Activated CD4-positive, alpha-beta memory T cell treated with anti-CD3 and anti-CD28 coated beads for 36 hours (primary cell): ENCODE measurements at regions of chr1 and their contacts with region 1.

Region 1: GRCh38 chr1:156751758-156752757 is 583 bp upstream of the HDGF start:
- DNase-seq: peak; percentile 99
- H3K4me3 Mint-ChIP-seq: peak overlapping the region; percentile 93
- H3K27ac Mint-ChIP-seq: peak overlapping the region; percentile 93
- H3K4me1 Mint-ChIP-seq: peaks cover 27% of the 10 kb centered on the region
- H3K27me3 Mint-ChIP-seq: no peaks in the 10 kb centered on the region

Region 2: GRCh38 chr1:156740679-156741612 is 11.1 kb before region 1 on chr1 and contains the start of gene MRPL24:
- CTCF ChIA-PET with region 1: interaction called, 11 read pairs
- POLR2A ChIA-PET with region 1: interaction called, 48 read pairs
- intact Hi-C with region 1: loop called (anchors 1 kb)
- DNase-seq: peak; percentile 98
- H3K4me3 Mint-ChIP-seq: peak within 1 kb of the TSS; percentile 89
- H3K27ac Mint-ChIP-seq: peak within 1 kb of the TSS; percentile 95
- H3K4me1 Mint-ChIP-seq: peaks cover 47% of the 10 kb centered on the region
- H3K27me3 Mint-ChIP-seq: no peaks in the 10 kb centered on the region
- total RNA-seq, gene MRPL24: 105 to 106 TPM

Region 3: GRCh38 chr1:156767101-156767878 is 15.2 kb after region 1 on chr1 and contains the start of gene PRCC:
- CTCF ChIA-PET with region 1: interaction called, 11 read pairs
- POLR2A ChIA-PET with region 1: interaction called, 33 read pairs
- intact Hi-C with region 1: loop called (anchors 1 kb)
- DNase-seq: peak; percentile 99
- H3K4me3 Mint-ChIP-seq: no peak within 1 kb of the TSS
- H3K27ac Mint-ChIP-seq: no peak within 1 kb of the TSS
- H3K4me1 Mint-ChIP-seq: peaks cover 36% of the 10 kb centered on the region
- H3K27me3 Mint-ChIP-seq: no peaks in the 10 kb centered on the region
- total RNA-seq, gene PRCC: 58.6 to 67.2 TPM

Region 4: GRCh38 chr1:156868341-156868740 is 116.3 kb after region 1 on chr1:
- CTCF ChIA-PET with region 1: no interaction called
- POLR2A ChIA-PET with region 1: no interaction called
- intact Hi-C with region 1: no loop called
- DNase-seq: no peak
- H3K4me3 Mint-ChIP-seq: no peak overlapping the region
- H3K27ac Mint-ChIP-seq: no peak overlapping the region
- H3K4me1 Mint-ChIP-seq: peaks cover 37% of the 10 kb centered on the region
- H3K27me3 Mint-ChIP-seq: peaks cover 21% of the 10 kb centered on the region